Body of pancreas (tissue), 4 donors: ENCODE measurements at regions of chr5 and their contacts with region 1.

Region 1: GRCh38 chr5:41856644-41857491 is 13.4 kb downstream of the OXCT1 start:
- DNase-seq: peak; percentile 40 to 64 (median 52)
- ATAC-seq: peak; percentile 86
- H3K4me3 ChIP-seq: no peak overlapping the region
- H3K27ac ChIP-seq: no peak overlapping the region
- H3K4me1 ChIP-seq: no peaks in the 10 kb centered on the region
- H3K27me3 ChIP-seq: no peaks in the 10 kb centered on the region
- CTCF ChIP-seq: peak; percentile 40 to 84 (median 75)
- POLR2A ChIP-seq: no peak

Region 2: GRCh38 chr5:42894057-42894456 is 1037.2 kb after region 1 on chr5:
- intact Hi-C with region 1: loop called (anchors 5 kb)
- DNase-seq: peak in 3 of 4 donors; percentile 15 to 54 (median 28)
- ATAC-seq: no peak
- H3K4me3 ChIP-seq: no peak overlapping the region
- H3K27ac ChIP-seq: no peak overlapping the region
- H3K4me1 ChIP-seq: no peaks in the 10 kb centered on the region
- H3K27me3 ChIP-seq: no peaks in the 10 kb centered on the region
- CTCF ChIP-seq: peak in 5 of 7 experiments; percentile 6 to 25 (median 10)
- POLR2A ChIP-seq: no peak